WTC11 (cell line): ENCODE measurements at regions of chr20 and their contacts with region 1.

Region 1: GRCh38 chr20:50790651-50791277 is 4.1 kb upstream of the BCAS4 start:
- DNase-seq: peak; percentile 92
- ATAC-seq: peak; percentile 76
- H3K4me3 Mint-ChIP-seq: no peak overlapping the region
- H3K27ac Mint-ChIP-seq: 0 out of 2 replicates have a peak overlapping the region, but pooled peaks have one; percentile 53
- H3K4me1 Mint-ChIP-seq: peaks cover 26% of the 10 kb centered on the region
- H3K27me3 Mint-ChIP-seq: peaks cover 4% of the 10 kb centered on the region
- CTCF ChIP-seq: peak; percentile 35; the same call in 1 of the 2 replicates

Region 2: DNA sequence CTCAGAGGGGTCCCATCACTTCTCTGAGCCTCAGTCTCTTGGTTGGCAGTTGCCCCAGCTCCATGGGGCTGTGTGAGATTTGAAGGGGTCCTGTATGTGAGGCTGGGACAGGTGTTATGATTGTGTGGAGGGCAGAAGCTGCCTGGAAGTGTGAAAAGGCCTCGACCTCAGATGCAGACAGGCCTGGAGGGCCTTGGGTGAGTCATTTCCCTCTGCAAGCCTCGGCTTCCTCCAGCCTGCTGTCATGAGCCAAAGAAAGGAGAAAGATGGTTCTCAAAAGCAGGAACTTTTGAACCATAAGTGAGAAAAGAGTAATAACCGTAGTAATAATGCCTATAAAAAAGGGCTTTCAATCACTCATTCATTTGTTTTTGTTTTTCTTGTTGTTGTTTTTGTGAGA is 770.5 kb before region 1 on chr20:
- CTCF ChIA-PET with region 1: no interaction called
- POLR2A ChIA-PET with region 1: no interaction called
- DNase-seq: no peak
- ATAC-seq: no peak
- H3K4me3 Mint-ChIP-seq: no peak overlapping the region
- H3K27ac Mint-ChIP-seq: no peak overlapping the region
- H3K4me1 Mint-ChIP-seq: peaks cover 11% of the 10 kb centered on the region
- H3K27me3 Mint-ChIP-seq: no peaks in the 10 kb centered on the region
- CTCF ChIP-seq: no peak

Region 3: GRCh38 chr20:50635667-50636503 is 154.9 kb before region 1 on chr20:
- CTCF ChIA-PET with region 1: interaction called, 18 read pairs
- POLR2A ChIA-PET with region 1: interaction called, 5 read pairs
- DNase-seq: peak; percentile 93
- ATAC-seq: peak; percentile 78
- H3K4me3 Mint-ChIP-seq: peak overlapping the region; percentile 42
- H3K27ac Mint-ChIP-seq: peak overlapping the region; percentile 86
- H3K4me1 Mint-ChIP-seq: peaks cover 53% of the 10 kb centered on the region
- H3K27me3 Mint-ChIP-seq: no peaks in the 10 kb centered on the region
- CTCF ChIP-seq: peak; percentile 88

Region 4: DNA sequence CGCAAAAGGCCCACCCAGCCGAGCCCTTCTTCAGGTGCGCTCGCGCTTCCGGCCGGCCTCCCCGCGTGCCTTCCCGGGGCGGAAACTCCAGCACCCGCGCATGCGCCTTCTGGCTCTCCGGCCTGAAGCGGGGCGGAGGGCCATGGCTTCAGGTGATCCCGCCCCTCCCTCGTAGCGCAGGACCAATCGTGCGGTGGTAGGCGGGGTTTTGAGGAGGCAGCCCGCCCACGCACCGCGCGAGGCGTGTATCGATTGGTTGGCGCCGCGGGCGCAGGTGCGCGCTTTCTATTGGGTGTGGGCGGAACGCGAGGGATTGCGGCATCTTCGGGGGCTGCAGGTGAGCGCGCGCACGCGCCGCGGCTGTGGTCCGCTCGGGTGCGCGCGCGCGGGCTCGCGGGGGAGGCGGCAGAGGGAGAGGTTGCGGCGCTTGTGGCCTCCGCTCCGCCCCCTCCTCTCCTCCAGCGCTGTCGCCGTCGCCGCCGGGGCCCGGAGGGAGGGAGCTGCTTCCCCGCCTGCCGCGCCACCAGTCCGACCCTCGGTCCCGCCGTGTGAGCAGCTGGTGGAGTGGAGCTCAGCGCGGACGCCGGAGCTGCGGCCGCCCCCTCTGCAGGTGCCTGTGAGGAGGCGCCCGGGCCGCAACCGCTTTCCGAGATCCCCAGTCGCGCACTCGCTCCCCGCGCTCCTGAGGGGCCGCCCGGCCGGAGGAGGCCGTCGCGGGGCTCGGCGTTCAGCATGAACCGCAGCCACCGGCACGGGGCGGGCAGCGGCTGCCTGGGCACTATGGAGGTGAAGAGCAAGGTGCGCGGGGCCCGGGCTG is 59.5 kb before region 1 on chr20 and contains the start of gene PARD6B:
- CTCF ChIA-PET with region 1: interaction called, 11 read pairs
- POLR2A ChIA-PET with region 1: no interaction called
- DNase-seq: peak; percentile 99
- ATAC-seq: peak; percentile 95
- H3K4me3 Mint-ChIP-seq: peak within 1 kb of the TSS; percentile 79
- H3K27ac Mint-ChIP-seq: peak within 1 kb of the TSS; percentile 95
- H3K4me1 Mint-ChIP-seq: peaks cover 40% of the 10 kb centered on the region
- H3K27me3 Mint-ChIP-seq: no peaks in the 10 kb centered on the region
- CTCF ChIP-seq: no peak
- total RNA-seq, gene PARD6B: 29.6 to 38.0 TPM (median 37.5 TPM) in 3 replicates

Region 5: GRCh38 chr20:50804418-50805064 is 13.8 kb after region 1 on chr20:
- CTCF ChIA-PET with region 1: interaction called, 32 read pairs
- POLR2A ChIA-PET with region 1: interaction called, 4 read pairs
- DNase-seq: no peak
- ATAC-seq: no peak
- H3K4me3 Mint-ChIP-seq: no peak overlapping the region
- H3K27ac Mint-ChIP-seq: peak overlapping the region; percentile 48
- H3K4me1 Mint-ChIP-seq: peaks cover 29% of the 10 kb centered on the region
- H3K27me3 Mint-ChIP-seq: no peaks in the 10 kb centered on the region; the same call in 1 of the 2 replicates
- CTCF ChIP-seq: no peak

Region 6: GRCh38 chr20:50865591-50865990 is 74.8 kb after region 1 on chr20:
- CTCF ChIA-PET with region 1: interaction called, 49 read pairs
- POLR2A ChIA-PET with region 1: interaction called, 11 read pairs
- DNase-seq: no peak
- ATAC-seq: no peak
- H3K4me3 Mint-ChIP-seq: no peak overlapping the region
- H3K27ac Mint-ChIP-seq: no peak overlapping the region
- H3K4me1 Mint-ChIP-seq: peaks cover 38% of the 10 kb centered on the region
- H3K27me3 Mint-ChIP-seq: no peaks in the 10 kb centered on the region
- CTCF ChIP-seq: no peak

Region 7: DNA sequence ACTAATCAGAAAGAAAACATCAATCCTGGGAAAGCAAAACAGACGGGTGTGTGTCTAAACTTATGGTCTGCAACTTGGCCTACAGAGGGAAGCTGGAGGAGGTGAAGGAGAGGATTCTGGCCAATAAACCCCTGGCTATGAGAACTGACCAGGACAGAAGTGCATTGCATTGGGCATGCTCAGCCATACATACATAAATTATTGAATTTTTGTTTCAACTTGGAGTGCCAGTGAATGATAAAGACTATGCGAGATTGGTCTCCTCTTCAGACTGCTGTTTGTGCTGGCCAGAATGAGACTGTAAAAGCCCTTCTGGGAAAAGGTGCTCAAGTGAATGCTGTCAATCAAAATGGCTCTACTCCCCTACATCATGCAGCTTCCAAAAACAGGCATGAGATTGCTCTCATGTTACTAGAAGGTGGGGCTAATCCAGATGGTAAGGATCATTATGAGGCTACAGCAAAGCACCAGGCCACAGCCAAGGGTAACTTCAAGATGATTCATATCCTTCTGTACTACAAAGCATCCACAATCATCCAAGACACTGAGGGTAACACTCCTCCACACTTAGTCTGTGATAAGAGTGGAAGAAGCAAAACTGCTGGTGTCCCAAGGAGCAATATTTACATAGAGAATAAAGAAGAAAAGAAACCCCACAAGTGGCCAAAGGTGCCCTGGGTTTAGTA is 123.1 kb after region 1 on chr20:
- CTCF ChIA-PET with region 1: interaction called, 16 read pairs
- POLR2A ChIA-PET with region 1: no interaction called
- DNase-seq: no peak
- ATAC-seq: no peak
- H3K4me3 Mint-ChIP-seq: no peak overlapping the region
- H3K27ac Mint-ChIP-seq: peak overlapping the region; percentile 73
- H3K4me1 Mint-ChIP-seq: peaks cover 76% of the 10 kb centered on the region
- H3K27me3 Mint-ChIP-seq: no peaks in the 10 kb centered on the region
- CTCF ChIP-seq: no peak

Region 8: DNA sequence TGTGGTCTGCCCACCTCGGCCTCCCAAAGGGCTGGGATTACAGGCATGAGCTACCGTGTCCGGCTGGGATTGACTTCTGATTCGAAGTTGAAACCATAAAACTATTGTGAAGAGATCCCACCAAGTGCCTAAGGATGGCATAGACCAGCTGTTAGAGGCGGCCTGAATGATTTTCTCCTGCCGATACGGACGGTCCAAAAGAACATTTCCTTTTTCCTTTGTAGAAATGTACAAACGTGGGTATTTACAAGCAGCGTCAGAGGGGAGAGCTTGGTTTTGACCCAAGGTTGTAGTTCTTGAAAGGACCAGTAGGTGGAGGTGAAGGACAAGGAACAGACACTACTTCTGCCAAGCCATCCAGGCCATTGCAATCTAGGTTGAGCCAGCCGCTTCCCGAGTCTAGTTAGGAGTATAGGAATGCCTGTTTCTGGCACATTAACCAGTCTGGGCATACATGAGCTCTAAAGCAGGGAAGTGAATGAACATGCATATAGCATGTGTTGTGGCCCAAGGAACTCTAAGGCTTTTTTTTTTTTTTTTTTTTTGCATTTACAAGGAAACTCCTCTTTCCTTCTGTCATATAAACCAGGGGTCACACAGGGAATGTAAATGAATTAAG is 196.9 kb after region 1 on chr20:
- CTCF ChIA-PET with region 1: interaction called, 20 read pairs
- POLR2A ChIA-PET with region 1: no interaction called
- DNase-seq: peak; percentile 69
- ATAC-seq: peak; percentile 70
- H3K4me3 Mint-ChIP-seq: no peak overlapping the region; the same call in 1 of the 2 replicates
- H3K27ac Mint-ChIP-seq: 0 out of 2 replicates have a peak overlapping the region, but pooled peaks have one; percentile 26
- H3K4me1 Mint-ChIP-seq: peaks cover 39% of the 10 kb centered on the region
- H3K27me3 Mint-ChIP-seq: no peaks in the 10 kb centered on the region; the same call in 1 of the 2 replicates
- CTCF ChIP-seq: peak; percentile 83